SK-N-SH (cell line): ENCODE measurements at regions of chr19 and their contacts with region 1.

Region 1: DNA sequence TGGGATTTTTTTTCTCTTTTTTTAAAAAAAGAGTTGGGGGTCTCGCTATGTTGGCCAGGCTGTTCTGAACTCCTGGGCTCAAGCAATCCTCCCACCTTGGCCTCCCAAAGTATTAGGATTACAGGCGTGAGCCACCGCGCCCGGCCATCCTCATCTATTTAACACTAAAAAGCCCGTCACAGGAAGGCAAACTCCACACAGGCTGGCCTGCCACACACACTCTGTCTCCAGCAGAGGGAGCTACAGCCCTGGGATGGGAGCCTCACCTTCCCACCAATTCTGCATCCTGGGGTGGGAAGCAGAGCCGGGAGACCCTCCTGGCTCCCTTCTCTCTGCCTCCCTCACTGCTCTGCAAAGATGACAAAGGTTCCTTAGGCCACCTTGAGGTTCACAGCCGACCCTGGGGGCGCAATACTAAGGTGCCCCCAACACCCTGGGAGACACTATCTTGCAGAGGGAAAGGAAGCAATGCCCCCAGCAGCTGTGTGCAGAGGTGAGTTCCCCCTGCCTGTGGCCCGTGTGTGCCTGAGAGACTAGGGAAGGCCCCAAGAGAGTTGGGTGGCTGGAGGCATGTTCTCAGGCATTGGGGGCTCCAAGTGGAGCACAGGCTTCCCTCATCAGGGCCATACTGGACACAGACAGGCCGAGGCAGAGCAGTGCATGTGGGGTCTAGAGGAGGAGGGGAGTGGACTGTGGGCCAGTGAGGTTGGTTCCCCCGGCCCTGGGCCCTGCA is 27.4 kb upstream of the TIMM44 start:
- DNase-seq: peak; percentile 81
- H3K4me3 ChIP-seq: no peak overlapping the region; a peak in 1 of 4 replicates
- H3K27ac ChIP-seq: no peak overlapping the region
- H3K4me1 ChIP-seq: no peaks in the 10 kb centered on the region
- H3K27me3 ChIP-seq: no peaks in the 10 kb centered on the region
- CTCF ChIP-seq: peak; percentile 86
- EP300 ChIP-seq: no peak
- RAD21 ChIP-seq: peak; percentile 66

Region 2: DNA sequence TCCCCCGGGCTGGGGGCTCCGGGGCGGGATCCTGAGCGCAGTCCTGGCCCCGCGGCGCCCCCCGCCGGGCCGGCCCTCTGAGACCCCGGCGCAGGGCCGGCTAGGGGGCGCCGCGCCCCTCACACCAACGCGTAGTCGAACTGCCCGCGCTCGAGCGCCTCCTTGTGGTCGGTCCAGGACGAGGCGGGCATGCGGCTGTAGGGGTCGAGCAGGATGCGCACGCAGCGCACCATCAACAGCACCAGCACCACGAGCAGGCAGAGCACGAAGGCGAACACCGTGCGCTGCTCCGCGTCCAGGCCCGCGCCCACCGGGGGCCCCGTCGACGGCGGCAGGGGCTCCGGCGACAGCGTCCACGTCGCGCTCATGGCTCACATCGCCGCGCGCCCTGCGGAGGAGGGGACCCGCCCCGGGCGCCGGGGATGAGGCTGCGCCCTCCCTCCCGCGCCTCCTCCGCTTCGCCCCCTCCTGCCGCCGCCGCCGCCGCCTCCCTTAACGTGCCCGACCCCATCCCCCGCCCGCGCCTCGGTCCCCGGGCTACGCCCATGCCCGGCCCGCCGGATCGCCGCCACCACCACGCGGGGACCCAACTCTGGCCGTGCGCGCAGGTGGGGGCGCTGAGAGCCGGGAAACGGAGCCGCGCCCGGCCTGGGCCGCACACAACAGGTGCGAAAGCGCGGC is 45.6 kb before region 1 on chr19:
- CTCF ChIA-PET with region 1: interaction called, 10 read pairs
- POLR2A ChIA-PET with region 1: no interaction called
- DNase-seq: peak; percentile 94
- H3K4me3 ChIP-seq: peak overlapping the region; percentile 64 to 72
- H3K27ac ChIP-seq: peak overlapping the region in 1 of 2 experiments; percentile 81; a peak in 2 of 4 replicates
- H3K4me1 ChIP-seq: peaks cover 43 to 63% of the 10 kb centered on the region in 2 experiments
- H3K27me3 ChIP-seq: no peaks in the 10 kb centered on the region
- CTCF ChIP-seq: peak; percentile 83
- EP300 ChIP-seq: no peak
- RAD21 ChIP-seq: peak; percentile 54

Region 3: DNA sequence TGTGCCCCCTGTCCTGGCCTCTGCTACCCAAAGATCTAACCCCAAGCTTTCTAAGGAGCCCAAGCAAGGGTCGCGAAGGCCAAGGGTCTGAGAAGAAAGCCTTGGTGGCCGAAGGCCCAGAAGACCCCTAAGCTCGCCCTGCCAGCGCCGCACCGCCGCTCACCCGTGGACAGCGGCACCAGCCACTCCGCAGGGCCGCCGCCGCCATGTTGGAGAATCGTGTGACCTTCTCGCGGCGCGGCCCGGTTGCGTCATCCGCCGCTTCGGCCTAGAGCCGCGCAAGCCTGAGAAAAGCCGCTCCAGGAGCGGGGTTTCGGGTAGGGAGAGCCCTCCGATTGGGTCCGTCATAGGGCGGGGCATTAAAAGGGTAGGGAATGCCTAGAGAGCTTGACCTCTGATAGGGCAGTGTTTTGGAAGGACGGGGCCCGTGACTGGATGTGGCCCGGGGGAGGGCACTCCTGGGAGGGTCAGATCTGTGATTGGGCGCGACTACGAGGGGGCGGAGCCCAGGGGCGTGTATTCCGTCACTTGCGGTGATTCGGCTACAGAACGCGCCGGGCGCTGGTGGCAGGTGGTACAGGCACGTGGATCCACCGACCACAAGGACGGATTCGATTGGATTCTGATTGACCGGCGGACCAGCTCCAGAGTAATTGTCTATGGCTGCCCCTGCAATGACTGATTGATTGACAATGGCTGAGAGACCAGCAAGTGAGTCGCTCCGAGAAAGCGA is 27.3 kb before region 1 on chr19 and contains the start of gene TIMM44:
- CTCF ChIA-PET with region 1: interaction called, 18 read pairs
- POLR2A ChIA-PET with region 1: no interaction called
- DNase-seq: peak; percentile 97
- H3K4me3 ChIP-seq: peak within 1 kb of the TSS; percentile 70 to 74
- H3K27ac ChIP-seq: peak within 1 kb of the TSS; percentile 62 to 85
- H3K4me1 ChIP-seq: peaks cover 0 to 6% of the 10 kb centered on the region in 2 experiments; a peak in 1 of 4 replicates
- H3K27me3 ChIP-seq: no peaks in the 10 kb centered on the region
- CTCF ChIP-seq: no peak
- EP300 ChIP-seq: no peak
- RAD21 ChIP-seq: no peak
- polyA plus RNA-seq, gene TIMM44: 49.7 and 50.9 TPM in 2 replicates

Region 4: DNA sequence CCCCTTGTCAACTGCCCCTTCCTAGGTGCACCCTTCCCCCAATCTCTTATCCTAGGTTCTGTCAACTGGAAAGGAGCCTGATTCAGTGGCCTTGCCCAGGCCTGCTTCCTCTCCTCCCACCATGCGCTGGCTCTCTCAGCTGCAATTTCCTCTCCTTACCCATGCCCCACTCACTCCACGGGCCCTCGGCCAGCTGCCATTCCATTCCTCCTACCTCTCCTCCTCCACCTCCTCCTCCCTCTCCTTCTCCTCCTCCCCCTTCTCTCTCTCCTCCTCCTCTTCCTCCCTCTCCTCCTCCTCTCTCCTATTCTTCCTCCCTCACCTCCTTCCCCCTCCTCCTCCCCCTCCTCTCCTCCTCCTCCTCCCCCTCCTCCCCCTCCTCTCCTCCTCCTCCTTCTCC is 17.8 kb before region 1 on chr19:
- CTCF ChIA-PET with region 1: interaction called, 19 read pairs
- POLR2A ChIA-PET with region 1: no interaction called
- DNase-seq: no peak
- H3K4me3 ChIP-seq: no peak overlapping the region
- H3K27ac ChIP-seq: no peak overlapping the region
- H3K4me1 ChIP-seq: no peaks in the 10 kb centered on the region; a peak in 1 of 4 replicates
- H3K27me3 ChIP-seq: no peaks in the 10 kb centered on the region
- CTCF ChIP-seq: no peak
- EP300 ChIP-seq: no peak
- RAD21 ChIP-seq: no peak

Region 5: DNA sequence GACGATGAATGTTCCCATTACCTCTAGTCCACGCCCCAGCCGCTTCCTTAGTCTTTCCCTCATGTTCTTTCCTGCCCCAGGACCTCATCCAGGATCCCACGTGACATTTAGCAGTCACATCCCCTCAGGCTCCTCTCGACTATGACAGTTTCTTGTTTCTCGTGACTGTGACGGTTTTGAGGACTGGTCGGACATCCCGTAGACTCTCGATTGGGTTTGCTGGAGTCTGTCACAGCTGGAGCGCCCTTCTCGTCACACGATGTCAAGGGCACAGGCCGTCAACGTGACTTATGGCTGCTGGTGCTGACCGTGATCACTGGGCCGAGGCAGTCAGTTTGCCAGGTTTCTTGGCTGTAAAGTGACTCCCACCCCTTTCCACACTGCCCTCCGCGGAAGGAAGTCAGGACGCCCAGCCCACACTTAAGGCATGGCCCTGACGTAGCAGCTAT is 11.8 kb after region 1 on chr19:
- CTCF ChIA-PET with region 1: interaction called, 18 read pairs
- POLR2A ChIA-PET with region 1: no interaction called
- DNase-seq: no peak
- H3K4me3 ChIP-seq: no peak overlapping the region
- H3K27ac ChIP-seq: no peak overlapping the region
- H3K4me1 ChIP-seq: peaks cover 0 to 10% of the 10 kb centered on the region in 2 experiments; a peak in 2 of 4 replicates
- H3K27me3 ChIP-seq: no peaks in the 10 kb centered on the region
- CTCF ChIP-seq: no peak
- EP300 ChIP-seq: no peak
- RAD21 ChIP-seq: no peak

Region 6: GRCh38 chr19:7994114-7994513 is 23.2 kb after region 1 on chr19:
- CTCF ChIA-PET with region 1: interaction called, 81 read pairs
- POLR2A ChIA-PET with region 1: no interaction called
- DNase-seq: no peak
- H3K4me3 ChIP-seq: no peak overlapping the region
- H3K27ac ChIP-seq: no peak overlapping the region
- H3K4me1 ChIP-seq: peaks cover 0 to 3% of the 10 kb centered on the region in 2 experiments; a peak in 1 of 4 replicates
- H3K27me3 ChIP-seq: no peaks in the 10 kb centered on the region
- CTCF ChIP-seq: no peak
- EP300 ChIP-seq: no peak
- RAD21 ChIP-seq: no peak

Region 7: GRCh38 chr19:8005534-8006256 is 34.8 kb after region 1 on chr19 and contains the start of gene ELAVL1:
- CTCF ChIA-PET with region 1: interaction called, 81 read pairs
- POLR2A ChIA-PET with region 1: interaction called, 3 read pairs
- DNase-seq: peak; percentile 98
- H3K4me3 ChIP-seq: peak within 1 kb of the TSS; percentile 71 to 90
- H3K27ac ChIP-seq: peak within 1 kb of the TSS; percentile 66 to 73
- H3K4me1 ChIP-seq: peaks cover 5 to 23% of the 10 kb centered on the region in 2 experiments; a peak in 2 of 4 replicates
- H3K27me3 ChIP-seq: no peaks in the 10 kb centered on the region
- CTCF ChIP-seq: no peak
- EP300 ChIP-seq: no peak
- RAD21 ChIP-seq: no peak
- polyA plus RNA-seq, gene ELAVL1: 41.7 and 49.6 TPM in 2 replicates

Region 8: GRCh38 chr19:8194528-8195267 is 223.8 kb after region 1 on chr19:
- CTCF ChIA-PET with region 1: no interaction called
- POLR2A ChIA-PET with region 1: no interaction called
- DNase-seq: no peak
- H3K4me3 ChIP-seq: no peak overlapping the region
- H3K27ac ChIP-seq: no peak overlapping the region
- H3K4me1 ChIP-seq: peaks cover 0 to 3% of the 10 kb centered on the region in 2 experiments; a peak in 1 of 4 replicates
- H3K27me3 ChIP-seq: no peaks in the 10 kb centered on the region
- CTCF ChIP-seq: no peak
- EP300 ChIP-seq: no peak
- RAD21 ChIP-seq: no peak